ENCODE measurements at regions of chr11 and their contacts with region 1.

Region 1: DNA sequence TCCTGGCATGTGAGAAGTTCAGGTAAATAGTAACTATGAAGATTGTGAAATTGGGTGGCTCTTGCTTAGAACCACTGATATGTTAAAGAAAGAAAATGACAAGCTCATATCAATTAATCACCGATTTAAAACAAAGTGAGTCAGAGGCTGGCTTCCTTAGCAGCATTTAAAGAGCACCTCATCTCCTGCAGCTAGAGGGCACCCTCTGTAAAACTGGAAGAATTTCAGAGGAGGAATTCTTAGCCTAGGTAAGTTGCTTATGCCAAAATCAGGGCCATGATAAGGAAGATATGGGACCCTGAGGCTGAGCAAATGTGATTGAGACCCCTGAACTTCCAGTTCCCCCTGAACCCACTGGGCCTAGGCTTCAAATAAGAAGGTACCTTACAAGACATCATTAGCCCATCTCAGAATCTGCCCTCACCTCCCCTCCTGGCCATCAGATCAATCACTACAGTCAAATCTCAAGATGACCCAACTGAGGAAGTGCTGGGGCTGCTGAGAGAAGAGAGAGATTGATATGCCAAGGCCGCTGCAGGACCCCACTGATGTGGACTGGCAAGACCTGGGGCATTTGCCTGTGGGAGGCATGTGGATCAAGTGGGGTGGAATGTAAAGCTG is 8.6 kb upstream of the CD3E start:
- DNase-seq: no peak
- H3K4me3 ChIP-seq: no peak overlapping the region
- H3K27ac ChIP-seq: no peak overlapping the region
- H3K4me1 ChIP-seq: no peaks in the 10 kb centered on the region
- H3K27me3 ChIP-seq: no peaks in the 10 kb centered on the region
- CTCF ChIP-seq: peak; percentile 36

Region 2: DNA sequence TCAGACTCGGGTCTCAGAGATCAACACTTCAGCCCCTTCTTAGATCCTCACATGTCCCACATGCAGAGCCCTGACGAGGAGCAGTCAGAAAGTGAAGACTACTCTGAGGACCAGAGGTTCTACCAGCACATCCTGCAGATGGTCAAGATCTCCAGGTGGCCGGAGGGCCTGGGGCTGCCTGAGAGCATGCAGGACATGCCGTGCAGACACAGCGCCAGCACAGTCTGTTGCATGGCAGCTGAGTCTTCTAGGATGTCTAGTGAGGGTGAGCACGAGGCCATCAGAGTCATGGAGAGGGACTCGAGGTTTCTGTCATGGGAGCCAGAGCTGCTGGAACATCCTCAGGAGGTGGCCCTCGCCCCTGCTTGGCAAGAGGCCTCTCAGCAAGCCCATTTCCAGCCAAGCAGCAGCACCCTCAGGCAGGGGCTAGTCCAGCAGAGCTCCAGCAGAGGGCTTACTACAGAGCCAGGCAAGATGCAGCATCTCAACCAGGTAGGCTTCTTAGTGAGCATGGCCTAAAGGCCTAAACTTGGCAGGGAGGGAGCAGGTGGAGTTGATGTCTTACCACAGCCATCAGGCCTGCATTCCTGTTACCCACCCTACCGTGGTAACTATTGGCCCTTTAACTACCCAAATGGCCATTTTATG is 939.7 kb before region 1 on chr11:
- intact Hi-C with region 1: no loop called
- DNase-seq: no peak
- H3K4me3 ChIP-seq: no peak overlapping the region
- H3K27ac ChIP-seq: no peak overlapping the region
- H3K4me1 ChIP-seq: no peaks in the 10 kb centered on the region
- H3K27me3 ChIP-seq: no peaks in the 10 kb centered on the region
- CTCF ChIP-seq: no peak

Region 3: DNA sequence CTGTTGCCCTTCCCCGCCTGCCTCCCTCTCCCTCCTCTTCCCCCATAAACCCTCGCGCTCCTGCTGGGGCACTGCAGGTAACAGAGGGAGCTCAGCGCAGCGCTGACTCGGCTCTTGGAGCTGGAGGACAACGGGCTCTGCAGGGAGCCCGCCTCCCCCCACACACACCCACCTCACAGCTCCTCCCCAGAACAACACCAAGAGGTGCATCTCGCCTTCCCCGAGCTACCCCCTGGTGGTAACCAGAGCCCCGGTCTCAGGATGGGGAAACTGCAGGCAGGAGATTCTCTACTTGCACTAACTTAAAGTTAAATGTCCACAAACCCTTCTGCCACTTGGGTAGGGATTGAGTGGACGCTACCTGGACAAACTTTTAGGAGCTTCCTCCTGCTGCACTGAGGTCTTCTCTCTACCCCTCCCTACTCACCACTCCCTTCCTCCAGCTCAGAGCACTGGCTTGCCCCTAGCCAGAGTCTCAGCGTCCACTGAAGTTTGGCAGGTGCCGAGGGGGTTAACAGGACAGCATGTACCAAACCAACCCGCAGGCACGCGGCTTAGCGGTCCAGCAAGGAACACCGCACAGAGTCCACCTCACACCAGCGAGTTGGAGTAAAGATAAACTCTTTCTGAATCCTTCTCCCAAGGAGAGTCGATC is 139.3 kb before region 1 on chr11:
- intact Hi-C with region 1: no loop called
- DNase-seq: no peak
- H3K4me3 ChIP-seq: no peak overlapping the region
- H3K27ac ChIP-seq: no peak overlapping the region
- H3K4me1 ChIP-seq: peaks cover 6% of the 10 kb centered on the region
- H3K27me3 ChIP-seq: peaks cover 45% of the 10 kb centered on the region
- CTCF ChIP-seq: no peak

Region 4: GRCh38 chr11:118353084-118353710 is 57.3 kb after region 1 on chr11:
- intact Hi-C with region 1: loop called (anchors 2 kb)
- DNase-seq: no peak
- H3K4me3 ChIP-seq: no peak overlapping the region
- H3K27ac ChIP-seq: no peak overlapping the region
- H3K4me1 ChIP-seq: no peaks in the 10 kb centered on the region
- H3K27me3 ChIP-seq: no peaks in the 10 kb centered on the region
- CTCF ChIP-seq: peak; percentile 53

Region 5: GRCh38 chr11:118522571-118523072 is 226.7 kb after region 1 on chr11:
- intact Hi-C with region 1: no loop called
- DNase-seq: no peak
- H3K4me3 ChIP-seq: no peak overlapping the region
- H3K27ac ChIP-seq: no peak overlapping the region
- H3K4me1 ChIP-seq: no peaks in the 10 kb centered on the region
- H3K27me3 ChIP-seq: no peaks in the 10 kb centered on the region
- CTCF ChIP-seq: no peak